ENCODE measurements at regions of chr5 and their contacts with region 1.

Region 1: DNA sequence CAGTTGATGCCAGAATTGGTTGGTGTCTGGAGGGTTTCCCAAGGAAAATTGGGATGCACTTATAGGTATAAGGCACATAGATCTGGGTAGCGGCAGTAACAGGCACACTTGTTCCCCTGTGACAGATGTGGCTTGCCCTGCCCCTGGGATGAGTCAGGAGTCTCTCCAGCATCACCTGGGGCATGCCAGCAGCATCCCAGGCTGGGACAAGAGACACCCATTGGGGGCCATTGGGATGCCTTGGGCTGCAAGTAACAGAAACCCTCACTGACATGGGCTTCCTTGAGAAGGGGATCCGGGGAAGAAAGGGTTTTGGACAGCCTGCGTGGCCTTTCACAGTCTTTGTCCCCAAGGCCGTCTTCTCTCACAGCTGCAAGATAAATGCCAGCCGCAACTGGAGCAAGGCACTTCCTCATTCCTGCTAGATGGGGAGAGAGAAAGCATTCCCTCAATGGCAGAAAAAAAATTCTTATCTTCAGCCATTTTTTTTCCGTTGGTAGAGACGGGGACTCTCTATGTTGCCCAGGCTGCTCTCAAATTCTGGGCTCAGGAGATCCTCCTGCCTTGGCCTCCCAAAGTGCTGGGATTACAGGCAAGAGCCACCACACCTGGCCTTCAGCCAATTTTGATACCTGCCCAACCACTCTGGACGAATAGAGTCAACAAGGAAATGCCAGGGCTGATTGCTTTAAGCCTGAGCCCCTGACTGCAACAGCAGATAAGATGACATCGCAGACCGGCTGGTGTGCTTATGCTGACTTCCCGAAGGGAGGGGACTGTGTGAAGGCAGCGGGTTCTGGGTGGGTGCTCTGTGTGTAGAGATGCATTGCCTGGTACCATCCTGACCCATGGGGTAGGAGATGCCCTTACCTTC is 13.4 kb upstream of the RNF130 start:
- DNase-seq: peak; percentile 80 to 88
- ATAC-seq: peak; percentile 97

Region 2: GRCh38 chr5:179836225-179837019 is 248.5 kb before region 1 on chr5:
- intact Hi-C with region 1: no loop called
- DNase-seq: no peak
- ATAC-seq: peak; percentile 38

Region 3: DNA sequence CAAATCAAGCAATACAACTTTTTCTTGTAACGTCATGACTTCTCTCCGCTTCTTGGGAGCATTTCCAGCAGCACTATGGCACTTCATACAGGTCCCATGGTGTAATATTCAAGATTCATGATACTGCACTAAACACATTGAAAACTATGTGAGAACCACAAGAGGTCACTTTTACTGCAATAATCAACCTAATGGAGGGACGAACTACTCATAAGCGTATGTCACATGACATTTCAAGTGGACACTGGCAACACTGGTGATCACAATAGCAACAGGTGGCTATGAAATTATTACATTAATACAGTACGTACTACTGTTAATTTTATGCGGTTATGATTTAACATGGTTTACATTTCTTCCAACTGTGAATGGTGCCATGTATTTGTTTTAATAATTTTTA is 98.6 kb before region 1 on chr5:
- intact Hi-C with region 1: loop called in 1 of 2 experiments (anchors 10 kb)
- DNase-seq: no peak
- ATAC-seq: no peak